AG04449 (cell line): ENCODE measurements at regions of chr3 and their contacts with region 1.

Region 1: GRCh38 chr3:124862006-124862405 is 25.2 kb downstream of the ITGB5 start:
- DNase-seq: no peak
- H3K4me3 ChIP-seq: no peak overlapping the region
- CTCF ChIP-seq: no peak

Region 2: DNA sequence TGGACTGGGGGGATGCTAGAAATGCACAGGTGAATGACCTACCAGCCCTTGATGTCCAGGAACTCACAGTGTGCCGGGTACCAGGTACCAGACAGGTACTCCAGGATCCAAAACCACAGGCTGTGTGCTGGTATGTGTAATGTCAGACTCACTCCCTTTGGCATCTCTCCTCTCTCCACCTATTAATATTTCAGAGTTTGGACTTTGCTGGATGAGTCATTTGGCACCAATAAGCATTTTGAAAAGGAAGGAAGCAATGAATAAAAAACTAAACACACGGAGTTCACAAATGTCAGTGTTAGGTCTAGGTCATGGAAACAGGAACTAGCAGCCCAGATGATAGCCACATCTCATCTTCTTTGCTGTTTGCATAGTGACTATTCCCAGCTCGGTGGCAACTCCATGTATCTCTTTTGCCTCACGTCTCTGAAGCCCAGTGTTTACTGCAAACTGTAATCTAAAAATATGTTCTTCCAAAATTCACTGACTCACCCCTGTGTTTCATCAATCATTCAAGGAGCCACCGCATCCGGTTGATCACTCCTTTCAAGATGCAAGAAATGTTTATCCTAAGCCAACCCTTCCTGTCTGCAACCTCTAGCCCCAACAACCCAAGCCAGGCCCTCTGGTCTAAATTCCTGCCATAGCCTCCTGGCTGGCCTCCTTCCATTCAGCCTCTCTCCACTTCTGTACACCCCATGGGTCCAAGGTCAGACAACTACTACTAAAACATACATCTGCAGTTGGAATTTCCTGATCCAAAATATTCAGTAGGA is 16.7 kb after region 1 on chr3:
- CTCF ChIA-PET with region 1: interaction called, 12 read pairs
- POLR2A ChIA-PET with region 1: interaction called, 7 read pairs
- DNase-seq: peak; percentile 77
- H3K4me3 ChIP-seq: no peak overlapping the region
- CTCF ChIP-seq: no peak